Mammary epithelial cell (primary cell): ENCODE measurements at regions of chr13 and their contacts with region 1.

Region 1: DNA sequence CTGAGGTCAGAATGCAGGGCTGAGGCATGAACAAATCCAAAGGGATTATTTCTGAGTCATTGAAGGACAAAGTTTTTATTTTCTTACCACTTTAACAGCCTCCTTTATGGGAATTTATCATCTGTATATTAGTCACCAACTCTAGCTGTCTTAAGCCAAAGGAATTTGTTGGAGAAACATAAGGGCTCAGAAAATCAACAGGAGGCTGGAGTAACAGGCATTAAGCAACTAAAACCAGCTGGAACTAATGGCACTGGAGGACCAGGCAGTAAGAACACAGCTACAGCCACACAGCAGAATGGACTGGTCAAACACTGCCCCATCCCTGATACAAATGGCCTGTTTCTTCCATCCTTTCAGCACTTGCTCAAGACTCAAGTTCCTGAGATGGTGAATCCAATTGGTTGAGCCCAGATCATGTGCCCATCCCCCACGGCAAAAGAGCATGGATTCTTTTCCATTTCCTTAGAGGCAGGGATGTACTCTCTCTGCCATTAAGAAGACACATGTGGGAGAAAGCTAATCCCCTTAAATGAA is 157.1 kb upstream of the FNDC3A start:
- DNase-seq: peak; percentile 87
- H3K4me3 ChIP-seq: no peak overlapping the region
- H3K27ac ChIP-seq: no peak overlapping the region
- H3K4me1 ChIP-seq: peaks cover 12% of the 10 kb centered on the region
- H3K27me3 ChIP-seq: no peaks in the 10 kb centered on the region
- CTCF ChIP-seq: no peak

Region 2: DNA sequence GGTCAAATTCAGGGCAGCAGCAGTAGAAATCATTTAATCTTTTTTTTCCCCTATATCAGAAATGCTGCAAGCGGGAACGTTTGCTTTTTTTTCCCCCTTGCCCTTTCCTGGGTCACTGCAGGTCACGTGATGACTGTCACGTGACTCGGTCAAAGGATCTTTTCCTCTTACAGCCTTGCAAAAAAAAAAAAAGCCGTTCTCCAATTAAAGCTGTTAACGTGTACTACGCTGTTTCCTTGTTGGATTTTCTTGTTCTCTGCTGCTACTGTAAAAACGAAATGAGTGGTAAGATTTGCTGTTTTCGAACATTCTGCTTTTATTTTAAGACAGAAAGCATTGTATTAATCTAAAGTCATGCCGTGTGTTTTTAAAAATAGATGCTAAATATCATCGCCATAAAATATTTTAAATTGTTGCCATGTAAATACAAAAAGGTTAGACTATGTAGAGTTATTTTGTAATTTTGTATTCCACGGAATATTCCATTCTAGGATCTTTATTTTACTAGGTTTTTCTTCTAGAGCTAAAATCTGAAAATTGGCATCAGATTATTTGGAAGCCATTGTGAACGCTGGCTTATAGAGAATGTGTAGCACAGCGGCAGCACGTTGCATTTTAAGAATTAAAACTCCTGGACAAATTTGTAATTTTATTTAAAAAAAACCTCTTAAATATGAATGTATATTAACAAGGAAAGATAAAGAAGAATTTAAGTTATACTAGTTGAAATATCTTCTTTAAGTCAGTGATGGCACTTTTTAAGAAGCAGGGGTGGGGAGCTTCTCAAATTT is 291.8 kb after region 1 on chr13:
- CTCF ChIA-PET with region 1: no interaction called
- dilution Hi-C with region 1: no loop called
- in situ Hi-C with region 1: no loop called
- intact Hi-C with region 1: loop called (anchors 10 kb)
- DNase-seq: peak; percentile 79
- H3K4me3 ChIP-seq: peak overlapping the region; percentile 26 to 99 (median 97)
- H3K27ac ChIP-seq: peak overlapping the region; percentile 90
- H3K4me1 ChIP-seq: peaks cover 13% of the 10 kb centered on the region
- H3K27me3 ChIP-seq: no peaks in the 10 kb centered on the region
- CTCF ChIP-seq: no peak